CD8-positive, alpha-beta memory T cell (primary cell): ENCODE measurements at regions of chr7 and their contacts with region 1.

Region 1: DNA sequence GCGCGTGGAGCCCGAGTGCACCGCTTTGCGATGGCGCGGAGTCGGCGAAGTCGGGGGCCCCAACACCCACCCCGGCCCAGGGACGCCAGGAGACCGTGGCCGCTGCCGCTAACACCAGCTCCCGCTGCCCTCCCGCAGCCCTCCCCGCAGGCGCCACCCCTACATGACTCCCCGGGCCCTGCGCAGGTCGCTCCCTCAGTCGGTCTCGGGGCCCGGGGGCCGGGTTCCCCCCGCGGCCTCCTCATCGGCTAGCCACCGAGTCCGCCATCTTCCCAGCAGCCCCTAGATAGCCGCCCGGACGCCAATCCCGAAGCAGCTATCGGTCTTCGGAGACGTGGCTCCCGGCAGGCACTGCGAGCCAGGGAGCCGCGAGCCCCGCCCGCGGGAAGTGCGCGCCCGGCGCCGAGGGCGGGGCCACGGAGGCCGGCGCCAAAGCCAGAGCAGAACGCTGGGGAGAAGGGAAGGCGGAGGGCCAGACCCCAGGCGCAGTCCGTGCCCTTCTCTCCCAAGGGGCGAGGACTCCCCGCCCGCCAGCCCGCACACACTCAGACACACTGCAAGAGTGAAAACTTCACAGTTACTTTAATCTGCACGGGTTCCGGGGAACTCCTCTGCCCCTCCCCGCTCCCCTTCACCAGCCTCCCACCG is at the start of gene FASTK:
- DNase-seq: peak; percentile 83 to 93 (median 89)
- H3K4me3 ChIP-seq: peak within 1 kb of the TSS; percentile 92
- H3K4me3 Mint-ChIP-seq: peak within 1 kb of the TSS; percentile 83 to 96 (median 87)
- H3K27ac ChIP-seq: peak within 1 kb of the TSS; percentile 89
- H3K27ac Mint-ChIP-seq: peak within 1 kb of the TSS; percentile 81 to 97 (median 92)
- H3K4me1 ChIP-seq: peaks cover 48% of the 10 kb centered on the region
- H3K4me1 Mint-ChIP-seq: peaks cover 29 to 66% (median 40%) of the 10 kb centered on the region in 3 donors
- H3K27me3 ChIP-seq: no peaks in the 10 kb centered on the region
- H3K27me3 Mint-ChIP-seq: peaks cover 0 to 8% of the 10 kb centered on the region in 2 donors
- total RNA-seq, gene FASTK: 83.1 to 88.8 TPM

Region 2: GRCh38 chr7:151057989-151058780 is 22.5 kb before region 1 on chr7:
- CTCF ChIA-PET with region 1: interaction called, 7 read pairs
- POLR2A ChIA-PET with region 1: interaction called, 10 read pairs
- DNase-seq: peak; percentile 94 to 99 (median 96)
- H3K4me3 ChIP-seq: peak overlapping the region; percentile 94
- H3K4me3 Mint-ChIP-seq: peak overlapping the region; percentile 88 to 95 (median 94)
- H3K27ac ChIP-seq: peak overlapping the region; percentile 91
- H3K27ac Mint-ChIP-seq: peak overlapping the region; percentile 88 to 98 (median 98)
- H3K4me1 ChIP-seq: peaks cover 39% of the 10 kb centered on the region
- H3K4me1 Mint-ChIP-seq: peaks cover 24 to 47% (median 36%) of the 10 kb centered on the region in 3 donors
- H3K27me3 ChIP-seq: no peaks in the 10 kb centered on the region
- H3K27me3 Mint-ChIP-seq: no peaks in the 10 kb centered on the region